Posterior vena cava (tissue), 2 donors: ENCODE measurements at regions of chr5 and their contacts with region 1.

Region 1: DNA sequence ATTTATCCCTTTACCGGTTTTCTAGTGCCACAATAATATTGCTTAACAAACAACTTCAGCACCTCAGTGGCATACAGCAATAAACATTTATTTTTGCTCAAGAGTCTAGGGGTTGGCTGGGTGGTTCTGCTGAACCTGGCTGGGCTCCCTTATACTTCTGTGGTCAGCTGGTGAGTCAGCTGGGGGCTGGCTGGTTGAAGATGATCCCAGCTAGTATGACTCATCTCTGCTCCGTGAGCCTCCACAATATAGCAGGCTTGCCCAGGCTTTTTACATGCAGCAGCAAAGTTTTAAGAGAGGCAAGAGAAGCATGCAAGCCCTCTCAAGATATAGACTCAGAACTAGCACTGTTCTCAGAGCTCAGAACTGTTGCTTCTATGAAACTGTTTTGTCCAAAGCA is 523.5 kb upstream of the CLINT1 start:
- DNase-seq: peak; percentile 92

Region 2: DNA sequence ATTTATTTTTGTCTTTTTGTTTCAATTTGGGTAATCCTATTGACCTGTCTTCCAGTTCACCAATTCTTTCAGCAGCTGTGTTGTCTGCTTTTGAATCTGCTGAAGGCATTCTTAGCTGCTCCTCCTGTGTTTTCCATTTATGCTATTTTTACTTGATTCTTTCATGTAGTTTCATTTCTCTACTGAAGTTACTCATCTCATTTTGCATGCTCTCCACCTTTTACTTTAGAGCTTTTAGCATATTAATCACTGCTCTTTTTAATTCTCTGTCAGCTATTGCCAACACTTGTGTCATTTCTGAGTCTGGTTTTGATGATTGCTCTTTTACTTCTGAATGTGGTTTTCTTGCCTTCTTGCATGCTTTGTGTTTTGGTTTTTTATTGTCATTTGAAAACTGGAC is 27.5 kb before region 1 on chr5:
- intact Hi-C with region 1: no loop called
- DNase-seq: no peak

Region 3: GRCh38 chr5:158463938-158464337 is 81.5 kb after region 1 on chr5:
- intact Hi-C with region 1: loop called in 1 of 2 experiments (anchors 10 kb)
- DNase-seq: peak; percentile 84

Region 4: DNA sequence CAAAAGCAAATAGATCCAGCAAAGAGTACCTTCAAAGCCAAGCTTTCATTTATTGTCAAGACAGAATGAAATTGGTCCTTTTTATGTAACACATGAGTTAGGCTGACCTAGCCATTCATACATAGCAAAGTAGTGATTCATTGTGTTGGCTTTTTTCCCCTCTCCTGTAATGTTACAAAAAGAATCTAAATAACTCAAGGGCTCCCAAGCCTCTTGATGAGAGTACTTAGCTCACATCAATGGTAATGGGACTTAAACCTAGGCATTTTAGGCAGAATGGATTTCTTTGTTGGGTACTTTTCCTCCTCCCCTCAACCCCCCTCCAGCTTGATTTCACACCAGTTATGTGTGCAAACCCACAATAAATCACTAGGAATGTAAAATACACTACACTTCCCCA is 593.6 kb after region 1 on chr5:
- intact Hi-C with region 1: no loop called
- DNase-seq: no peak